Activated CD4-positive, alpha-beta T cell treated with anti-CD3 and anti-CD28 coated beads for 36 hours (primary cell): ENCODE measurements at regions of chr10 and their contacts with region 1.

Region 1: GRCh38 chr10:132665946-132666704 is 119.8 kb downstream of the NKX6-2 start:
- DNase-seq: peak; percentile 59
- ATAC-seq: peak; percentile 98
- H3K4me3 Mint-ChIP-seq: no peak overlapping the region
- H3K27ac Mint-ChIP-seq: no peak overlapping the region
- H3K4me1 Mint-ChIP-seq: peaks cover 12% of the 10 kb centered on the region
- H3K27me3 Mint-ChIP-seq: no peaks in the 10 kb centered on the region

Region 2: DNA sequence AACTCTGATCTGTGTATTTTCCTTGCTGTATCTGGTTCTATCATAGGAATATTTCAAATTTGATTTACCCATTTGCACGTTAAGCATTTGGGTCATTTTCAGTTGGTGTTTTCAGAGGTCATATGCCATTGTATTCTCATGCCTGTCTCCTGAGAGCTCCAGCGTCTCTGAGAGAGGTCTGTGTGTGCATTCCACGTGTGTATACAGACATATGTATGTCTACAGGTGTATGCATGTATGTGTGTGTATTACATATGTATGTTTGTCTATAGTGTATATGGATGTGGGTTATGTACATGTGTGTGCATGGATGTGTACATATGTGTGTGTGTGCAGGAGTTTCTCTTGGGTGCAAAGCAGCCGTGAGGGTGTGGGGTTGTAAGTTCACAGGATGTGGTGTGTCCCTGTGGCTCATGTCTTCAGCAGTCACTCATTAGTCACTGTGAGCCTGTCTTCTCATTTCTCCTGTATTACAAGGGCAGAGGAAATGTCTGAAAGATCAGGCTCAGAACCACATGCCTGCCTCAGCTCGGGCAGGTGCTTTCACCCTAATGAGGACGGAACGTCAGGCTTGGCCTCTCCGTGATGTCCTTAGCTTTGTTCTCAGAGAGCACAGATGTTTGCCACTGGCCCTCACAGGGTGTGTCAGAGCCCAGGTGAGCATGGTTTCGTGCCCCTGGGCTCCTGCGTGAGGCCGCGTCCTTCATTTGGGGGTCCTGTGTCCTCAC is 18.2 kb after region 1 on chr10:
- CTCF ChIA-PET with region 1: no interaction called
- POLR2A ChIA-PET with region 1: no interaction called
- intact Hi-C with region 1: loop called (anchors 1 kb)
- DNase-seq: peak; percentile 75
- ATAC-seq: peak; percentile 98
- H3K4me3 Mint-ChIP-seq: no peak overlapping the region
- H3K27ac Mint-ChIP-seq: peak overlapping the region; percentile 79
- H3K4me1 Mint-ChIP-seq: peaks cover 22% of the 10 kb centered on the region
- H3K27me3 Mint-ChIP-seq: no peaks in the 10 kb centered on the region